ENCODE measurements at regions of chrX and their contacts with region 1.

Region 1: GRCh38 chrX:68894513-68895340 is 65.9 kb downstream of the EFNB1 start:
- DNase-seq: peak; percentile 77 to 86 (median 81)
- ATAC-seq: peak; percentile 92 to 93 (median 92)
- H3K4me3 ChIP-seq: peak overlapping the region in 9 of 12 donors; percentile 2 to 42 (median 31)
- H3K27ac ChIP-seq: peak overlapping the region; percentile 83 to 97 (median 91)
- H3K4me1 ChIP-seq: peaks cover 0 to 47% (median 20%) of the 10 kb centered on the region in 12 donors
- H3K27me3 ChIP-seq: peaks cover 0 to 3% (median 0%) of the 10 kb centered on the region in 9 donors
- CTCF ChIP-seq: no peak
- POLR2A ChIP-seq: peak in 1 of 2 donors; percentile 47

Region 2: GRCh38 chrX:68684291-68684918 is 210.3 kb before region 1 on chrX:
- intact Hi-C with region 1: no loop called
- DNase-seq: peak; percentile 78 to 87 (median 83)
- ATAC-seq: peak; percentile 69 to 92 (median 77)
- H3K4me3 ChIP-seq: no peak overlapping the region
- H3K27ac ChIP-seq: peak overlapping the region in 11 of 12 donors; percentile 36 to 90 (median 74)
- H3K4me1 ChIP-seq: peaks cover 0 to 68% (median 25%) of the 10 kb centered on the region in 12 donors
- H3K27me3 ChIP-seq: peaks cover 0 to 15% (median 0%) of the 10 kb centered on the region in 9 donors
- CTCF ChIP-seq: no peak
- POLR2A ChIP-seq: peak in 1 of 2 donors; percentile 7

Region 3: GRCh38 chrX:68834371-68835103 is 60.2 kb before region 1 on chrX:
- intact Hi-C with region 1: loop called in 7 of 10 experiments (anchors 2 to 10 kb)
- DNase-seq: no peak
- ATAC-seq: no peak
- H3K4me3 ChIP-seq: peak overlapping the region in 2 of 12 donors; percentile 71 to 89
- H3K27ac ChIP-seq: peak overlapping the region in 1 of 12 donors; percentile 2
- H3K4me1 ChIP-seq: peaks cover 0 to 43% (median 5%) of the 10 kb centered on the region in 12 donors
- H3K27me3 ChIP-seq: peaks cover 0 to 4% (median 0%) of the 10 kb centered on the region in 9 donors
- CTCF ChIP-seq: no peak
- POLR2A ChIP-seq: no peak

Region 4: GRCh38 chrX:68929332-68930150 is 34.8 kb after region 1 on chrX:
- intact Hi-C with region 1: loop called in 3 of 10 experiments (anchors 5 kb)
- DNase-seq: peak; percentile 26 to 77 (median 54)
- ATAC-seq: peak in 3 of 4 donors; percentile 68 to 74 (median 68)
- H3K4me3 ChIP-seq: no peak overlapping the region
- H3K27ac ChIP-seq: peak overlapping the region in 11 of 12 donors; percentile 27 to 87 (median 56)
- H3K4me1 ChIP-seq: peaks cover 0 to 47% (median 14%) of the 10 kb centered on the region in 12 donors
- H3K27me3 ChIP-seq: no peaks in the 10 kb centered on the region
- CTCF ChIP-seq: no peak
- POLR2A ChIP-seq: peak in 1 of 2 donors; percentile 16

Region 5: DNA sequence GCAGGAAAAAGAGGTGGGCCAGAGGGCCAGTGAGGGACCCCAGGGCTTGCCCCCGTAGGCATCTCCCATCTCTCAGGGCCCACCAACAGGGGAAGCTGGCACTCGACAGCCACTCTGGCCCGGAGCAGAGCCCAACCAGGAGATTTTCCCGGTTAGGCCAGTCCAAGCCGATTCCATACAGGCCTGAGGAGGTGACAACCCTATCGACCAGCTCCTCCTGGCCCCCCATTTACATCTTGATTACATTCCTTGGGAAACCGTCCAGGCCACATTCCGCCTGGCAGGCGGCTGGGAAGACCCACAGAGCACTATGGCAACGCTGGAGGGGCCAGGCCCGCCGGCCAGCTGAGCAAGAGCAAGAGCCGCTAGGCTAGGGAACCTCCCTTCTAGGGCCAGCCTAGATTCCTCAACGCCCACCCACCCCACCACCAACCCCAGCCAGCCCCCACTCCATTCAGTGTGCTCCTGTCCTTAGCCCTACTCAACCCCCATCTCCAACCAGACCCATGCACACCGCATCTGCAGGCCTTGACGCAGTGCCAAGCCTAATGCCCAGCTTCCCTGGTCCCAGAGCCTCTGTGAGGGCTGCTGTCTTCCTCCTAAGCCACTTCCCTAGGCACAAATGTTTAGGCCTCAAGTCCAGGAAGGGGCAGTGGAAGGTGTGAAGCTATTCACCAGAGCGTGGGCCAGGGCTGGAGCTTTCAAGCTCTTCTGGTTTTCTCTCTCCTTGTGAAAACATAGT is 95.3 kb after region 1 on chrX:
- intact Hi-C with region 1: loop called in 1 of 10 experiments (anchors 10 kb)
- DNase-seq: peak; percentile 41 to 63 (median 48)
- ATAC-seq: peak; percentile 72 to 87 (median 80)
- H3K4me3 ChIP-seq: no peak overlapping the region
- H3K27ac ChIP-seq: peak overlapping the region in 7 of 12 donors; percentile 20 to 57 (median 33)
- H3K4me1 ChIP-seq: peaks cover 0 to 34% (median 12%) of the 10 kb centered on the region in 12 donors
- H3K27me3 ChIP-seq: peaks cover 0 to 11% (median 0%) of the 10 kb centered on the region in 9 donors
- CTCF ChIP-seq: no peak
- POLR2A ChIP-seq: no peak

Region 6: GRCh38 chrX:68995780-68996551 is 101.2 kb after region 1 on chrX:
- intact Hi-C with region 1: loop called in 2 of 10 experiments (anchors 2 to 10 kb)
- DNase-seq: peak; percentile 69 to 75 (median 72)
- ATAC-seq: peak; percentile 85 to 92 (median 86)
- H3K4me3 ChIP-seq: peak overlapping the region in 8 of 12 donors; percentile 3 to 35 (median 23)
- H3K27ac ChIP-seq: peak overlapping the region; percentile 47 to 82 (median 72)
- H3K4me1 ChIP-seq: peaks cover 0 to 48% (median 27%) of the 10 kb centered on the region in 12 donors
- H3K27me3 ChIP-seq: peaks cover 0 to 16% (median 0%) of the 10 kb centered on the region in 9 donors
- CTCF ChIP-seq: no peak
- POLR2A ChIP-seq: no peak

Region 7: GRCh38 chrX:69027181-69028005 is 132.7 kb after region 1 on chrX:
- intact Hi-C with region 1: loop called in 1 of 10 experiments (anchors 2 kb)
- DNase-seq: no peak
- ATAC-seq: peak in 1 of 4 donors; percentile 71
- H3K4me3 ChIP-seq: no peak overlapping the region
- H3K27ac ChIP-seq: peak overlapping the region in 1 of 12 donors; percentile 1
- H3K4me1 ChIP-seq: peaks cover 0 to 34% (median 12%) of the 10 kb centered on the region in 12 donors
- H3K27me3 ChIP-seq: peaks cover 0 to 5% (median 0%) of the 10 kb centered on the region in 9 donors
- CTCF ChIP-seq: no peak
- POLR2A ChIP-seq: no peak

Region 8: GRCh38 chrX:69179380-69179911 is 284.7 kb after region 1 on chrX:
- intact Hi-C with region 1: no loop called
- DNase-seq: no peak
- ATAC-seq: no peak
- H3K4me3 ChIP-seq: no peak overlapping the region
- H3K27ac ChIP-seq: no peak overlapping the region
- H3K4me1 ChIP-seq: no peaks in the 10 kb centered on the region
- H3K27me3 ChIP-seq: peaks cover 0 to 24% (median 0%) of the 10 kb centered on the region in 9 donors
- CTCF ChIP-seq: no peak
- POLR2A ChIP-seq: no peak

Measured in heart left ventricle (tissue), 16 donors.